Left cardiac atrium (tissue), 4 donors: ENCODE measurements at regions of chr12 and their contacts with region 1.

Region 1: DNA sequence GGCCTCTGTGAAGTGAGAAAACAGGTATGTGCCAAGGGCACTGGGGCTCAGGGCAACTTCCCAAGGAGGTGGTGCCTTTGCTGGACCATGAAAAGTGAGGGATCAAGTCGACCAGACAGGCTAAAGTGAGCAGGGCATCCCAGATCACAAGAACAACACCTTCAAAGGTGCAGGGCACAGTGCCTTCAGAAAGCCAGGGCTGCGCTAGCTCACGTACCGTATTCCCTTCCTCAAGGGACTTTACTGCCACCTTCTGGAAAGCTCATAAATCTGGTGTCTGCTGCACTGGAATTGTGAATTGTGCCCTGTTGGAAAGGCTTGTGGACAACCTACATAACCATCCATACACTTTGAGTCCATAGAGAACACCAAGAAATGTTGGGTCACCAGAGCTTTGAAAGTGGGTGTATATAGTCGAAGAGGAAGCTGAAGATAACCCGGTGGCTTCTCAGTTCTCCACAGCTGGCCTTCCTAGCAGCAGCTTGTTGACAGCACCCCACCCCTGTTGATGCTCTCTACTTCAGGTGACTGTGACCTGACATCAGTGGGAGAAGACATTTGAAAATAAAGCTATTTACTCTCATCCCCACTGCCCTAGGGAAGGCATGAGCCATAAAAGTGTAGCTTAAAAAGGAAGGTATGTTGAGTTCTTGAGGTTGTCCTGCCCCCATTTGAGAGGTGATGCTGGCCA is 24.5 kb downstream of the FIGNL2 start:
- DNase-seq: no peak
- ATAC-seq: peak in 1 of 2 donors; percentile 7

Region 2: GRCh38 chr12:51424662-51425438 is 399.2 kb before region 1 on chr12 and contains the start of gene SLC4A8:
- intact Hi-C with region 1: loop called (anchors 5 to 10 kb)
- DNase-seq: peak; percentile 88
- ATAC-seq: peak; percentile 92 to 99
- total RNA-seq, gene SLC4A8: 0.29 to 0.71 TPM

Region 3: DNA sequence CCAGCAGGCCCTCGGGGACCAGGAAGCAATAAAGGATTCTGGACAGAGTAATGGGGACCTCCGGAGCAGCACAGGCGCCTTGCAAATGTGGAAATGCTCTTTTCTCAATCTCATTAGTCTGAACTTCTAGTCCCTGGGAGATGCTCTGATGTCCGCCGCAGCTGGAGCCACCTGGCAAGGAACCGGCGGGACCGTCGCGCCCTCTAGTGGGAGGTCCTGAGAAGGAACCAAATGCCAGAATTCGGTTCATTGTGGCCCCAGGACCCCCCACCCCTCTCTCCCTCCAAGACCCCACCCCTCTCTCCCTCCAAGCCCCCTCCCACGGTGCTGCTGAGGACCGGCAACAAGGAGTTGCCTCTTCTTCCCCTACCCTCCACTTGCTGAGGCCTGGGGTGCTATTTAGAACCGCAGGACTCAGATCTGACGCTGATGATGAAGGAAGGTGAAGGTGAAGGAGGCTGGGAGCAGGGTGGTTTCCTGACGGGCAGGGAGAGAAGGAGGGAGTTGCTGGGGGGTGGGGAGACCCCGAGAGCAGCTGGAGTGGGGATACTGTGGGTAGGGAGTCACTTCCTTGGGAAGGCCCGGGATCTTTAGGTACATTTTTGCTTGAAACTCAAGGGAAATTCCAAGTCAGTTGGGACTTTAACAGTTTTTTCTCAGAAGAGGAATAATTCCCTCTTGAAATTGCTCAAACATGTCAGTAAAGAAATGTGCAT is 298.0 kb after region 1 on chr12:
- intact Hi-C with region 1: no loop called
- DNase-seq: peak; percentile 72
- ATAC-seq: peak; percentile 28 to 45